Panc1 (cell line): ENCODE measurements at regions of chr18 and their contacts with region 1.

Region 1: GRCh38 chr18:45967007-45967706 is at the start of gene EPG5:
- DNase-seq: no peak
- ATAC-seq: peak; percentile 98
- H3K4me3 ChIP-seq: peak within 1 kb of the TSS; percentile 97 to 99
- H3K27ac ChIP-seq: peak within 1 kb of the TSS; percentile 84
- H3K4me1 ChIP-seq: peaks cover 5% of the 10 kb centered on the region; the same call in 1 of the 2 replicates
- H3K27me3 ChIP-seq: no peaks in the 10 kb centered on the region
- CTCF ChIP-seq: no peak
- total RNA-seq, gene EPG5: 12.9 TPM

Region 2: GRCh38 chr18:45730832-45731575 is 236.2 kb before region 1 on chr18:
- CTCF ChIA-PET with region 1: no interaction called
- POLR2A ChIA-PET with region 1: no interaction called
- in situ Hi-C with region 1: no loop called
- intact Hi-C with region 1: no loop called
- DNase-seq: peak; percentile 69
- ATAC-seq: peak; percentile 92
- H3K4me3 ChIP-seq: no peak overlapping the region
- H3K27ac ChIP-seq: no peak overlapping the region
- H3K4me1 ChIP-seq: peaks cover 2% of the 10 kb centered on the region; the same call in 1 of the 2 replicates
- H3K27me3 ChIP-seq: no peaks in the 10 kb centered on the region
- CTCF ChIP-seq: no peak

Region 3: DNA sequence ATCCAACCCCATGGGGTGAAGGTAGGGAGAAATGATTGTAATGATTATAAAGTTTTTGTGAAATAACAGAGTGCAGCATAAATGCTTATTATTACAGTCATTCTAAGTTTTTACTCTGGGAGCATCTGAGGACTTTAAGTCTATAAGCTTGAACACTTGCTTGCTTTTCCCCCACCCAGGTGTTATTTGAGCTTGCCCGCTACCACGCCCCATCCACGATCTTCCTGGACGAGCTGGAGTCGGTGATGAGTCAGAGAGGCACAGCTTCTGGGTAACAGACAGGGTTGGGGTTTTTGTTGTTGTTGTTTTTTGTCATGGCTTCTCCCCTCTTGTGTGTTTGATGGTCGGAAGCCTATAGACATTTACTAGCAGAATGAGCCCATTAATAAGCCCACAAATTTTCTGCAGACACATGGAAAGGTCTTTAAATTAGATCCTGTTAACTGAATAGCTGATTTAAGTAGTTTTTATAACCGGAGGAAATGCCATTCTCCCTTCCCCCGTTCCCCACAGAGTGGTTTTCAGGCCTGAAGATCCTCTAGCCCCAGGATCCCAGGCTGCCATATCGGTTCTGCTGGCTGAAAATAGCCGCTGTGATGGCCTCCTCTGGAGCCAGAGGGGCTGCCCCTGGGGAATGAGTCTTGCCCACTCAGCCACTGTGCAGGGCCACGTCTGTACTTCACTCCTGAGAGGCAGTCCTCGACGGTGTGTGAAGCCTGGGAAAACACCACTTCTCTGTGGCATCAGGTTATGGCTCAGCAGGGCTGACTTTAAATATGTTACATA is 1108.1 kb after region 1 on chr18:
- CTCF ChIA-PET with region 1: interaction called, 10 read pairs
- POLR2A ChIA-PET with region 1: no interaction called
- in situ Hi-C with region 1: no loop called
- intact Hi-C with region 1: no loop called
- DNase-seq: no peak
- ATAC-seq: no peak
- H3K4me3 ChIP-seq: no peak overlapping the region
- H3K27ac ChIP-seq: no peak overlapping the region
- H3K4me1 ChIP-seq: no peaks in the 10 kb centered on the region
- H3K27me3 ChIP-seq: no peaks in the 10 kb centered on the region
- CTCF ChIP-seq: no peak